ENCODE measurements at regions of chr7 and their contacts with region 1.

Region 1: DNA sequence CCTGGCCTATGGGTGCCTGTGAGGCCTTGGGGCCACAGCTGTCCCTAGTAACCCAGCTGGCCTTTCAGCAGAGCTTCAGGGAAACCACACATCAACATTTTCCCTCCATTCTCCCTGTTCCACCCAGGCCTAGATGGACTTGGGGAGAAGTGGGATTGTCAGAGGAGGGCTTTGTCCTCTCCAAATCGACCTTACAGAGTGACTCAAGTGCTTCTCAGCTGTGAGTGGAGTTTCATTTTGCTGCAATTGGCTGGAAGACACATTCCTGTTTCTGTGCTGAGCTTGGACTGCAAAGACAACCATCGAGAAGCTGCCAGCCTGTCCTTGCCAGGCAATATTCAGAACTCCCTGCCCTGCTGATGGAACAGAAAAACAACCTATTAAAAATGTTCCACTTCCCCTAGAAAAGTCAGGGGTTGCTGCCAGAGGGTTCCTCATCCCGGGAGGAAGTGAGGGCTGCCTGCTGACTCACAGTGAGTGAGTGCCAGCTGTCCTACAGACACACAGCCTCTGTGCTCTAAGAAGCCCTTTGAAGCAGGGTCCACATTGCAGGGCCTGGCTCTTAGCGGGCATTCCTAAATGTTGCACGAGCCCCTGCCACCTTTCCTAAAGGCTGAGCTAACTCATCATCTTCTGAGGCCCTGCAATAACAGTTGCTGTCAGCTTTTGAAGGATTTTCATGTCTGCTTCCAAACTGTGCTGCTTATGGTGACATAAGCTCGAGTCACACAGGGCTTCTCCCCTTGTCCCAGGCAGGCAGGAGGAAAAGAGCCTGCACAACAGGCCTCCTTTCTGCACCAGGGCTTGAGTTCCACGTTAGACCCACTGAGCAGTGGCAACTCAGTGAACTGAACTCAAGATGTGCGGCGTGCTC is 20.5 kb downstream of the STRA8 start:
- DNase-seq: peak; percentile 89
- H3K4me3 ChIP-seq: no peak overlapping the region
- H3K27ac ChIP-seq: peak overlapping the region; percentile 66
- H3K4me1 ChIP-seq: peaks cover 18% of the 10 kb centered on the region
- H3K27me3 ChIP-seq: no peaks in the 10 kb centered on the region
- CTCF ChIP-seq: no peak
- POLR2A ChIP-seq: no peak

Region 2: GRCh38 chr7:135211179-135211945 is 42.8 kb before region 1 on chr7 and contains the start of gene WDR91:
- CTCF ChIA-PET with region 1: no interaction called
- POLR2A ChIA-PET with region 1: interaction called, 4 read pairs
- dilution Hi-C with region 1: no loop called
- intact Hi-C with region 1: loop called (anchors 2 kb)
- DNase-seq: peak; percentile 97
- H3K4me3 ChIP-seq: peak within 1 kb of the TSS; percentile 86 to 94 (median 91)
- H3K27ac ChIP-seq: peak within 1 kb of the TSS; percentile 93
- H3K4me1 ChIP-seq: peaks cover 8% of the 10 kb centered on the region
- H3K27me3 ChIP-seq: no peaks in the 10 kb centered on the region
- CTCF ChIP-seq: no peak
- POLR2A ChIP-seq: peak; percentile 77
- total RNA-seq, gene WDR91: 7.0 and 9.8 TPM in 2 replicates

Region 3: DNA sequence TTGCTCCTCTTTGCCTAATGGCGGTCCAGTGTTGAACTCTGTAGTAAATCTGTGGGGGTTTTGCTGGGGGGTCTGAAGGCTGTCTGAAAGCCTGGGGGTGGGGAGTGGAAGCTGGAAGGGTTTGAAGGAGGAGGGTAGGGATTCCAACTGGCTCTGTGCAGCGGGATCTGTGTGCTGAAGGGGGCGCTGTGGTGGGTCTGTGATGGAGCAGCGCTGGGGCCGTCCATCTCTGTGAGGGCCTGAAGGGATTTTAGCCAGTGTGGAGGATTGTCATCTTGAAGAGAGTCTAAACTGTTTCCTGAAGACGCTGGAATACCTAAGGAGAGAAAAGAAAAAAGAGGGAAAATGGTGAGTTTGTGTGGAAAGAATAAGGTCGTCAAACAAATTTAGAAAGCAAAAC is 108.7 kb after region 1 on chr7:
- CTCF ChIA-PET with region 1: no interaction called
- POLR2A ChIA-PET with region 1: no interaction called
- dilution Hi-C with region 1: no loop called
- intact Hi-C with region 1: no loop called
- DNase-seq: no peak
- H3K4me3 ChIP-seq: no peak overlapping the region
- H3K27ac ChIP-seq: no peak overlapping the region
- H3K4me1 ChIP-seq: no peaks in the 10 kb centered on the region
- H3K27me3 ChIP-seq: no peaks in the 10 kb centered on the region
- CTCF ChIP-seq: peak in 1 of 2 donors; percentile 14
- POLR2A ChIP-seq: no peak